ENCODE measurements at regions of chr20 and their contacts with region 1.

Region 1: DNA sequence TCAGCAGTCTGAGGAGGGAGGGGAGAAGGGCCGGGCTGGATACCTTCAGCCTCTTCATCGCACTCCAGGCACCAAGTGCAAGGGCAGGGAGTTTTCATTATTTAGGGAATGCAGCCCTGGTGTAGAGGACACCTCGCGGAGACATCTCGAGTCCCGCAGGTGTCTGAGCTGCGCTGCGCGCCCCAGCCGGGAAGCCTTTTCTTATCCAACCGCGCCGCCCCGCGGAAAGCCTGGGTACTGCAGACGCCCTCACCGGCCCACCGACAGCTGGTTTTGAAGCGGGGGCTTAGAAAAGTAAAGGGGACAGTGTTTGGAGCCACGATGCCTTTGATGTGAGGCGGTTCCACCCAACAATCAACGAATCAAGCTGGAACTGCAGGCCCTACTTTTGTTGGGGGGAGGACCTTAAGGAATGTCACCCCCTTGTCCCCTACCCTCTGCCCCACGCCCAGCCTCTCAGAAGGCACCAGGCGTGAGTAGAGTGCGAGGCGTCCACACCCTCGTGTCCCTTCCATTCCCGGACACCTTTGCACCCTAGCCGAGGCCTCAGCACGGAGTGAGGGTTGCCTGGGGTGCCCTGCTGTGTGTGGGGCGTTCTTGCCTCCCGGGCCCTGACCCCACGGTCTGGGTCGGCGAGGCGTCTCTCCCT is 8.6 kb downstream of the NKX2-2 start:
- DNase-seq: peak in 3 of 4 donors; percentile 48 to 95 (median 53)
- ATAC-seq: peak; percentile 81
- H3K4me3 ChIP-seq: peak overlapping the region in 1 of 2 donors; percentile 30
- H3K27ac ChIP-seq: no peak overlapping the region
- H3K4me1 ChIP-seq: peaks cover 16 to 30% of the 10 kb centered on the region in 2 donors
- H3K27me3 ChIP-seq: peaks cover 66 to 100% of the 10 kb centered on the region in 2 donors
- CTCF ChIP-seq: peak; percentile 95 to 99

Region 2: DNA sequence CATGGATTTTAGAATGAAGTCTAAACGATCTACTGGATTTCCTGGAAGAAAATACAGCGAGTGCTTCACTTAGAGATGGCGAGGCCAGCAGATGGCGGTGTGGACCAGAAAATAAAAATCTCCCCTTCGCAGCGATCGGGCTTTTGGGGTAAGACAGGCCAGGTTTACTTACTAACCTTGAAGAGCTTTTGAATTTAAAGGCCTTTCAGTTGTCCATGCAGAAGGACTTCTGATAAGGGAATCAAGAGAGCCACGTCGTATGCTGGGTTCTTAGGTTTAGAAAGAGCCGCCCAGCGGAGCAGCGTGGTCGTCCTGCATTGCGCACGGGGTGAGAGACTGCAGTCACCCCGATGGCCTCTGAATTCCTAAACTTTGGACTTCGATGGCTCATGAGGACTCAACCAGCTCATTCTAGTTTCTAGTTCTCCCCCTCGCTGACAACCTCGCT is 667.7 kb before region 1 on chr20:
- intact Hi-C with region 1: loop called in 1 of 2 experiments (anchors 10 kb)
- DNase-seq: peak in 2 of 4 donors; percentile 55 to 76
- ATAC-seq: peak; percentile 93
- H3K4me3 ChIP-seq: no peak overlapping the region
- H3K27ac ChIP-seq: no peak overlapping the region
- H3K4me1 ChIP-seq: peaks cover 0 to 6% of the 10 kb centered on the region in 2 donors
- H3K27me3 ChIP-seq: peaks cover 0 to 19% of the 10 kb centered on the region in 2 donors
- CTCF ChIP-seq: peak; percentile 56 to 61

Region 3: GRCh38 chr20:21235484-21236445 is 269.5 kb before region 1 on chr20:
- intact Hi-C with region 1: loop called (anchors 5 to 10 kb)
- DNase-seq: peak; percentile 47 to 87 (median 58)
- ATAC-seq: peak; percentile 97
- H3K4me3 ChIP-seq: no peak overlapping the region
- H3K27ac ChIP-seq: no peak overlapping the region
- H3K4me1 ChIP-seq: peaks cover 0 to 5% of the 10 kb centered on the region in 2 donors
- H3K27me3 ChIP-seq: no peaks in the 10 kb centered on the region
- CTCF ChIP-seq: peak; percentile 60 to 80

Region 4: GRCh38 chr20:21395666-21396598 is 109.4 kb before region 1 on chr20:
- intact Hi-C with region 1: loop called in 1 of 2 experiments (anchors 10 kb)
- DNase-seq: peak in 1 of 4 donors; percentile 74
- ATAC-seq: peak; percentile 45
- H3K4me3 ChIP-seq: no peak overlapping the region
- H3K27ac ChIP-seq: no peak overlapping the region
- H3K4me1 ChIP-seq: peaks cover 3 to 19% of the 10 kb centered on the region in 2 donors
- H3K27me3 ChIP-seq: peaks cover 100% of the 10 kb centered on the region in 2 donors
- CTCF ChIP-seq: no peak

Region 5: GRCh38 chr20:21618759-21619416 is 113.6 kb after region 1 on chr20:
- intact Hi-C with region 1: no loop called
- DNase-seq: no peak
- ATAC-seq: no peak
- H3K4me3 ChIP-seq: no peak overlapping the region
- H3K27ac ChIP-seq: no peak overlapping the region
- H3K4me1 ChIP-seq: no peaks in the 10 kb centered on the region
- H3K27me3 ChIP-seq: peaks cover 0 to 30% of the 10 kb centered on the region in 2 donors
- CTCF ChIP-seq: no peak

Measured in left lung (tissue), 14 donors.